CD8-positive, alpha-beta T cell (primary cell): ENCODE measurements at regions of chr14 and their contacts with region 1.

Region 1: DNA sequence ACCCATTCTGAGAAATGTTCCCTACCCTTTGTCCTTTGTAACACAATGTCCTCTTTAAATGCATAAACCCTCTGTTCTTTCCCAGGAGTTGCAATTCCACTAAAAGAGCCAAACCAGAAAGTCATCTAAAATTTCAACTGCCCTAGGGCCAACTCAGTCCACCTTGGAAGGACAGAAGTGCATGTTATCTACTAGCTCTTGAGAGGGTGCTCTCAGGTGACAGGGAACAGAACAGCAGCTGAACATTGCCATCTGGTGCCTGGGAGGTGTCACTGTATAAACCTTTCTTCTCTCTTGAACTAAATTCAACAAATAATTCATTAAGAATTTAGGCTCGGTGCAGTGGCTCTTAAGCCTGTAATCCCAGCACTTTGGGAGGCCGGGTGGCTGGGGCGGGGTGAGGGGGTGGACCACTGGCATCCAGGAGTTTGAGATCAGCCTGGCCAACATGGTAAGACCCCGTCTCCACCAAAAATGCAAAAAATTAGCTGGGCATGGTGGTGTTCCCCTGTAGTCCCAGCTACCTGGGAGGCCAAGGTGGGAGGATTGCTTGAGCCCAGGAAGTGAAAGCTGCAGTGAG is 10.3 kb upstream of the FERMT2 start:
- DNase-seq: peak in 8 of 9 experiments; percentile 30 to 80 (median 60)
- ATAC-seq: peak; percentile 87
- H3K4me3 ChIP-seq: no peak overlapping the region
- H3K4me3 Mint-ChIP-seq: no peak overlapping the region
- H3K27ac ChIP-seq: no peak overlapping the region
- H3K27ac Mint-ChIP-seq: peak overlapping the region; percentile 5
- H3K4me1 ChIP-seq: no peaks in the 10 kb centered on the region
- H3K4me1 Mint-ChIP-seq: peaks cover 6% of the 10 kb centered on the region
- H3K27me3 ChIP-seq: no peaks in the 10 kb centered on the region
- H3K27me3 Mint-ChIP-seq: no peaks in the 10 kb centered on the region
- CTCF ChIP-seq: peak; percentile 54

Region 2: DNA sequence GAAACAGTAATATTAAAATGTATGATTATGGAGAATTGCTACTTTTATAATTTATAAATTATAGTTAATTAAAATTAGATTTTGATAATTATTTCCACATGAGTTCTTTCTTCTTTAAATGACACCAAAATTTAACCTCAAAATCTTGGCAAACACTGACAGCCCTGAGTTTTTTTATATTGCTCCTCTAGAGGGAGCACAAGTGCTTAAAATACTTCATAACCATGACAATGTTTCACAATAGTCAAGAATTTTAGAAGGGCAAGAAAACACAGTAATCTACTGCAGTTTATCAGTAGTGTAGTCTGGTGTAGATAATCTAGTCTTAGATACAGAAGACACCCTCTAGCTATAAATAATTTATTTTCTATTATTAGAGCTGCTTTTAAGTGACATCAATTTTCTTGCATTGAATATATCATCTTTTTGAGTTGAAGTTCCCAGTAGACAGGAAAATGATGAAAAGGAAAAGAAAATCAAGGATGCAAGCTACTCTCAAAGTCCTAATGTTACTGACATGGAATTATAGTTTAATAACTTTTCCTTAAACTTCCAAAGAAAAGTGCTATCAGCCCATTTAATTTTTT is 661.4 kb before region 1 on chr14:
- CTCF ChIA-PET with region 1: interaction called, 5 read pairs
- POLR2A ChIA-PET with region 1: no interaction called
- intact Hi-C with region 1: loop called (anchors 1 to 2 kb)
- DNase-seq: peak in 2 of 9 experiments; percentile 60 to 74
- ATAC-seq: peak; percentile 49
- H3K4me3 ChIP-seq: no peak overlapping the region
- H3K4me3 Mint-ChIP-seq: no peak overlapping the region
- H3K27ac ChIP-seq: no peak overlapping the region
- H3K27ac Mint-ChIP-seq: no peak overlapping the region
- H3K4me1 ChIP-seq: no peaks in the 10 kb centered on the region
- H3K4me1 Mint-ChIP-seq: peaks cover 30% of the 10 kb centered on the region
- H3K27me3 ChIP-seq: no peaks in the 10 kb centered on the region
- H3K27me3 Mint-ChIP-seq: no peaks in the 10 kb centered on the region
- CTCF ChIP-seq: peak; percentile 96

Region 3: GRCh38 chr14:52824507-52824906 is 136.6 kb before region 1 on chr14:
- CTCF ChIA-PET with region 1: interaction called, 143 read pairs
- POLR2A ChIA-PET with region 1: interaction called, 4 read pairs
- intact Hi-C with region 1: loop called (anchors 1 kb)
- DNase-seq: no peak
- ATAC-seq: no peak
- H3K4me3 ChIP-seq: no peak overlapping the region
- H3K4me3 Mint-ChIP-seq: no peak overlapping the region
- H3K27ac ChIP-seq: no peak overlapping the region
- H3K27ac Mint-ChIP-seq: no peak overlapping the region
- H3K4me1 ChIP-seq: no peaks in the 10 kb centered on the region
- H3K4me1 Mint-ChIP-seq: no peaks in the 10 kb centered on the region
- H3K27me3 ChIP-seq: no peaks in the 10 kb centered on the region
- H3K27me3 Mint-ChIP-seq: peaks cover 4% of the 10 kb centered on the region
- CTCF ChIP-seq: no peak

Region 4: GRCh38 chr14:52888838-52889484 is 72.2 kb before region 1 on chr14:
- CTCF ChIA-PET with region 1: interaction called, 11 read pairs
- POLR2A ChIA-PET with region 1: no interaction called
- intact Hi-C with region 1: no loop called
- DNase-seq: no peak
- ATAC-seq: no peak
- H3K4me3 ChIP-seq: no peak overlapping the region
- H3K4me3 Mint-ChIP-seq: no peak overlapping the region
- H3K27ac ChIP-seq: no peak overlapping the region
- H3K27ac Mint-ChIP-seq: no peak overlapping the region
- H3K4me1 ChIP-seq: no peaks in the 10 kb centered on the region
- H3K4me1 Mint-ChIP-seq: no peaks in the 10 kb centered on the region
- H3K27me3 ChIP-seq: peaks cover 0 to 2% of the 10 kb centered on the region in 2 experiments
- H3K27me3 Mint-ChIP-seq: no peaks in the 10 kb centered on the region
- CTCF ChIP-seq: no peak

Region 5: DNA sequence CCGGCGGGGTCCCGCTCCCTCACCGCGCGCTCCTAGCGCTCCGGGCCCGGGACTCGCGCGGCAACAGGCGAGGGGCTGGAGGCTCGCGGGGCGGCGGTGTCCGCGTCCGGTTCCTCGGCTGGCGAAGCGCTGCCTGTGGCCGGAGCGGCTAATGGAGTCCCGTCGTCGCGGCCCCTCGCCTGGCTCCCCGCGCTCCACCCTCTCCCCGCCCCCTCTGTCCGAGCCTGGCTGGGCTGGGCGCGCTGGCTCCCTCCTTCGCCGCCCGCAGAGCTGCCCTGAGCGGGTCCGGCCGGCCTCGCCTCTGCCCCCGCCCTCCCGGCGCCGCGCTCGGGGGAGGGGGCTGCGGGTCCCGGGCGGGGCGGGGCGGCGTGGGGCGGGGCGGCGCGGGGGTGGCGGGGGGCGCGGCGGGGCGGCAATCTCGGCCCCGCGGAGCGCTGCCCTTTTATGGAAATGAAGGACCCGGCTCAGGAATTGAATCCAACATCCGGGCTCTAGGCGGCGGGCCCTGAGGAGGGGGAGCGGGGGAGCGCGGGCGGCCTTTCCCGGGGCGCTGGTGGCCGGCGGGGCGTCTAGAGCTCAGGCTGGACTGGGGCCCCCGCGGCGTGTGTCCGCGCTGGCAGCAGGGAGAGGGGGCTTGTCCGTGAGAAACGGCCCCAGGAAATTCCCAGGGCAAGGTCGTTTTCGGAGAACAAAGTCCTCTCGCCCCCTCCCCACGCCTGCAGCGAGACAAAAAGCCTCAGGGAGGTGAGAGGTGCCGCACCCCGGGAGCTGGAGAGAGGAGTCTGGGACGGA is 10.1 kb before region 1 on chr14 and contains the start of gene FERMT2:
- CTCF ChIA-PET with region 1: interaction called, 15 read pairs
- POLR2A ChIA-PET with region 1: interaction called, 3 read pairs
- intact Hi-C with region 1: no loop called
- DNase-seq: peak in 4 of 9 experiments; percentile 7 to 29 (median 28)
- ATAC-seq: peak; percentile 48
- H3K4me3 ChIP-seq: peak within 1 kb of the TSS; percentile 50 to 59
- H3K4me3 Mint-ChIP-seq: peak within 1 kb of the TSS; percentile 81
- H3K27ac ChIP-seq: no peak within 1 kb of the TSS
- H3K27ac Mint-ChIP-seq: no peak within 1 kb of the TSS
- H3K4me1 ChIP-seq: peaks cover 20% of the 10 kb centered on the region
- H3K4me1 Mint-ChIP-seq: peaks cover 20% of the 10 kb centered on the region
- H3K27me3 ChIP-seq: peaks cover 29 to 41% of the 10 kb centered on the region in 2 experiments
- H3K27me3 Mint-ChIP-seq: peaks cover 46% of the 10 kb centered on the region
- CTCF ChIP-seq: no peak
- total RNA-seq, gene FERMT2: not detected

Region 6: DNA sequence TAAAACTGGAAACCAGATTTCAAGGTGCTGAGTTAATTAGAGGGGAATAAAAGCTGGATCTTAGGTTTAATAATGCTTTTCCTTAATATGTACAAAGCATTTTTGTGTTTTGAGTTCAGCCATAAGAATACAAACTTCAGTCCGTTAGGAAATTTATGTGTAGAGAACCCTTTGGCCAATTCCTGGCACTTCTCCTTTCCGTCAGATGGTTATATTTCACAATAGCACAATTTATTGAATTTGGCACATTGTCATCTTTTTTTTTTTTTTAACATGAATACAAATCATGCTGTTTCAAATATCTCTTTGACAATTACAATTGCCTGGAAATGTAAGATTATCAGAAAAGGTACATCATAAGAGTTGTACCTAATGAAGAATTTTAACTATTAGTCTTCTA is 248.2 kb after region 1 on chr14:
- CTCF ChIA-PET with region 1: no interaction called
- POLR2A ChIA-PET with region 1: no interaction called
- intact Hi-C with region 1: no loop called
- DNase-seq: no peak
- ATAC-seq: no peak
- H3K4me3 ChIP-seq: no peak overlapping the region
- H3K4me3 Mint-ChIP-seq: no peak overlapping the region
- H3K27ac ChIP-seq: no peak overlapping the region
- H3K27ac Mint-ChIP-seq: no peak overlapping the region
- H3K4me1 ChIP-seq: no peaks in the 10 kb centered on the region
- H3K4me1 Mint-ChIP-seq: no peaks in the 10 kb centered on the region
- H3K27me3 ChIP-seq: no peaks in the 10 kb centered on the region
- H3K27me3 Mint-ChIP-seq: no peaks in the 10 kb centered on the region
- CTCF ChIP-seq: no peak